Cardiac septum (tissue), 1 donor: ENCODE measurements at regions of chr1 and their contacts with region 1.

Region 1: DNA sequence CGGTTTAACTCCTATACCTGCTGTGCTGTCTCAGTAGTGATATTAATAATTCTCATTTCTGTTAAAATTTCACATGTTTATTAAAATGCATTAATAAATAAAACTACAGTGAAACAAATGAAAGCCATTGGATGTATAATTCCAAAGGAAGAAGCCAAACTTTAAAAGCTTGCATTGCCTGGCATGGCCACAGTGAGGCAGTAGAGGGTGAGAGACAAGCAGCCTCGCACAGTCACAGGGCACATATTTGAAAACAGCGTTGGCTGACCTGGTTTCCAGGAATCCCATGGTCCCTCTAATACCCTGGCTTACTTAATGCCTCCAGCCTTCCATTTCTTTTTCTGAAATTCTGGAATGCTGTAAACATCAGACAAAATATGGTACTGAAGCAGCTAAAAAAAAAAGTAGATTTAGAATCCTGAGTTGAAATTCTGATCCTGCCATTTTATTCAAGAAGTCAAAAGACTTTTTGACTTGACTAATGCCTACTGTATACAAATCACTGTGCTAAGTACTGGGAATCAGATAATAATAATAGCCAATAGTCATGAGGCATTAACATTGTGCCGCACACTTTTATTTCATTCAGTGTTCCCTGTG is 6.7 kb upstream of the RNASEL start:
- DNase-seq: no peak

Region 2: GRCh38 chr1:182092336-182092735 is 503.4 kb before region 1 on chr1:
- intact Hi-C with region 1: loop called (anchors 5 kb)
- DNase-seq: no peak

Region 3: DNA sequence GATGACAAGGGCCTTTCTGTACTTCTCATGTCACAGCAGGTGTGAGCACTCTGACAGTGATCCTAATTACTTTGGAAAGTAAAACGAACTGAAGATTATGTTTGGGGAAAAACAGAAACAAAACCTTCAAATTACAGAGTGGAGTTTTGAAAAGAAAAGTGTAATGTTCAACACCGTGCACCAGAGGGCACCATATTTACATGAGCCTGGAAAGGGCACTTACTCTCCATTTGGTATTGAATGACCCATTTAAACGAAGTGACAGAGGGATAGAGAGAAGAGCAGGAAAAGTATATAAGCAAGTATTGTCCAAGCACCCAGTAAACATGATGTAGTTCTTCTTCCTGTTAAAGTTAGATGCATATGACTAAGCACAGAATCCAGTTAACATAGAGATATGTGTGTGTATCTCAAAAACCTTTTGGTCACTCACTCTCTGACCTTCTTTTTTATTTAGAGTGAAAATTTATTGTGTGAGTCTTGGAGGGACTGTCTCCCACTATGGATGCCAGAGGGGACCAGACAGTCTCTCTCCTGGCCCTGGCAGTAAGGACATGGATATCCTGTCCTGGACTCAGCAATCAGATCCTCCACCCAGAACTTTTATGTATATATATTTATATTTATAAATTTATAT is 149.6 kb before region 1 on chr1:
- intact Hi-C with region 1: loop called (anchors 2 kb)
- DNase-seq: no peak

Region 4: GRCh38 chr1:182549346-182549745 is 46.4 kb before region 1 on chr1:
- intact Hi-C with region 1: no loop called
- DNase-seq: no peak